GM12878 (cell line): ENCODE measurements at regions of chr3 and their contacts with region 1.

Region 1: GRCh38 chr3:4978204-4978965 is 852 bp upstream of the BHLHE40 start:
- DNase-seq: peak; percentile 78
- ATAC-seq: peak; percentile 52
- H3K4me3 ChIP-seq: peak overlapping the region; percentile 72
- H3K27ac ChIP-seq: peak overlapping the region; percentile 84
- H3K4me1 ChIP-seq: peaks cover 27% of the 10 kb centered on the region
- H3K27me3 ChIP-seq: no peaks in the 10 kb centered on the region
- CTCF ChIP-seq: no peak
- EP300 ChIP-seq: peak; percentile 60 to 80; a peak in 3 of 4 replicates
- POLR2A ChIP-seq: peak; percentile 89
- RAD21 ChIP-seq: 0 out of 2 replicates have a peak, but pooled peaks have one; percentile 5

Region 2: GRCh38 chr3:4744405-4745234 is 233.8 kb before region 1 on chr3:
- CTCF ChIA-PET with region 1: interaction called, 35 read pairs
- POLR2A ChIA-PET with region 1: interaction called, 230 read pairs
- RAD21 ChIA-PET with region 1: interaction called, 342 read pairs
- SMC1A ChIA-PET with region 1: interaction called, 122 read pairs
- in situ Hi-C with region 1: no loop called
- intact Hi-C with region 1: no loop called
- DNase-seq: no peak
- ATAC-seq: no peak
- H3K4me3 ChIP-seq: no peak overlapping the region
- H3K27ac ChIP-seq: no peak overlapping the region
- H3K4me1 ChIP-seq: peaks cover 14% of the 10 kb centered on the region
- H3K27me3 ChIP-seq: no peaks in the 10 kb centered on the region
- CTCF ChIP-seq: no peak
- EP300 ChIP-seq: no peak
- POLR2A ChIP-seq: no peak
- RAD21 ChIP-seq: no peak

Region 3: GRCh38 chr3:4786431-4786830 is 192.0 kb before region 1 on chr3:
- CTCF ChIA-PET with region 1: interaction called, 10 read pairs
- POLR2A ChIA-PET with region 1: interaction called, 3 read pairs
- RAD21 ChIA-PET with region 1: interaction called, 6 read pairs
- SMC1A ChIA-PET with region 1: interaction called, 36 read pairs
- in situ Hi-C with region 1: no loop called
- intact Hi-C with region 1: no loop called
- DNase-seq: no peak
- ATAC-seq: no peak
- H3K4me3 ChIP-seq: no peak overlapping the region
- H3K27ac ChIP-seq: no peak overlapping the region
- H3K4me1 ChIP-seq: no peaks in the 10 kb centered on the region
- H3K27me3 ChIP-seq: no peaks in the 10 kb centered on the region
- CTCF ChIP-seq: no peak
- EP300 ChIP-seq: no peak
- POLR2A ChIP-seq: no peak
- RAD21 ChIP-seq: no peak

Region 4: DNA sequence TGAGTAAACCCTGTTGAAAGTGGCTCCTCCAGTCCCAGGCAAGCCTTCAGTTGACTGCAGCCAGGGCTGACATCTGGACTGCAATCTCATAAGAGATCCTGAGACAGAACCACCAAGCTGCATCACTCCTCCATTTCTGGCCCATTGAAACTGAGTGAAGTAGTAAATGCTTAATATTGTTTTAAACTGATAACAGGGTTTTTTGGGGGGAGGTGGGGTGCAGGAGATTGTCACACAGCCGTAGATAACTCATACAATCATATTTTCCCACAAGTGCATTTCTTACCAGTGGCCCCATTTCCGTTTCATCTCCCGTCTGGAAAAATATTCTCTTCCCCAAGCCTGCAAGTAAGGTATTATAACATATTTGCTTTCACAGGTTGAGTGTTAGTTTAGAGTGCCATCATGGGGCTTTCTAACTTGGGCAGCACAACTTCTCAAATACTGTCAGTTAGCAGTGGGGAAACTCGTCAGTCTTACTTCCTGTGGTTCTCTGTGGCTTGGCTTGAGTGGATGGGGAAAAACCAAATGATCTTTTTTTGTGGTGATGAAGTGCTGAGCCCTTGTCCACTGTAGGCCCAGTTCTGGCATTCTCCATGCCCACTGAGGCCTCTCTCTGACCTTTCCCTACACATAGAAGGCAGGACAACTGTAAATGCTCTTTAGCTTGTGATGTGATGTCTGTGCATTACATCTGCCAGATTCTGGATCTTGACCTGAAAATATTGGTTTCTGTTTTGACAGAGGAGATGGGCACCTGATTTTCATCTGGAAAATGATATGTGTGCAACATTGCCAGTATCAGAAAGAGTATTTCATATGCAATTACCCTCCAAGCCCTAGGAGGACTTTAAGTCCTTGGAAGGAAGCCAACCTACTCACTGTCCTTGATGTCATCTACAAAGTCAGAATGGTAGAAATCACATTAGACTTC is 89.2 kb before region 1 on chr3:
- CTCF ChIA-PET with region 1: interaction called, 17 read pairs
- POLR2A ChIA-PET with region 1: interaction called, 3 read pairs
- RAD21 ChIA-PET with region 1: interaction called, 11 read pairs
- SMC1A ChIA-PET with region 1: interaction called, 25 read pairs
- in situ Hi-C with region 1: no loop called
- intact Hi-C with region 1: loop called (anchors 1 kb)
- DNase-seq: peak; percentile 71
- ATAC-seq: peak; percentile 96
- H3K4me3 ChIP-seq: no peak overlapping the region; the same call in 1 of the 2 replicates
- H3K27ac ChIP-seq: peak overlapping the region; percentile 69
- H3K4me1 ChIP-seq: peaks cover 12% of the 10 kb centered on the region
- H3K27me3 ChIP-seq: no peaks in the 10 kb centered on the region
- CTCF ChIP-seq: peak in 1 of 3 experiments; percentile 45; a peak in 3 of 6 replicates
- EP300 ChIP-seq: peak; percentile 51 to 71; a peak in 3 of 4 replicates
- POLR2A ChIP-seq: no peak
- RAD21 ChIP-seq: peak; percentile 74

Region 5: DNA sequence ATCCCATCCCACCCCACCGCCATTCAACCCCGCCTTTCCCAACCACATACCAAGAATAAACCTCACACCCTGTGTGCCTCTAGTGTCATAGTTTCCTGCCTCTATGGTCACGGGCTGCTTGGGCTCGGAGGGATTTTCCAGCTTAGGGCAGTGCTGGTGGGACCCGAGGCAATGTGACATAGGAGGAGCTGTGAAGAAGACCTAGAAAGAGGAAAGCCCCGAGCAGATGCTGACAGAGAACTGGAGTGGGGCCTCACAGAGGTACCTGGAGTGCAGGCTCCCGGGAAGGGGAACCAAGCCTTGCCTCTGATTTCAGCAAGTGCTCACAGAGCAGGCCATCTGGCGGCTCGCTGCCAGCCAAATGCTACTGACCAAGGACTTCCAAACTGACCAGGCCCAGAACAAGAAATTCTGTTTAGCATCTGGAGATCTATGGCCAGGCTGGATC is 28.4 kb after region 1 on chr3:
- CTCF ChIA-PET with region 1: interaction called, 330 read pairs
- POLR2A ChIA-PET with region 1: interaction called, 111 read pairs
- RAD21 ChIA-PET with region 1: interaction called, 421 read pairs
- SMC1A ChIA-PET with region 1: interaction called, 186 read pairs
- in situ Hi-C with region 1: no loop called
- intact Hi-C with region 1: no loop called
- DNase-seq: peak; percentile 95
- ATAC-seq: peak; percentile 78
- H3K4me3 ChIP-seq: 0 out of 2 replicates have a peak overlapping the region, but pooled peaks have one; percentile 26
- H3K27ac ChIP-seq: peak overlapping the region; percentile 94
- H3K4me1 ChIP-seq: peaks cover 53% of the 10 kb centered on the region
- H3K27me3 ChIP-seq: no peaks in the 10 kb centered on the region
- CTCF ChIP-seq: peak in 1 of 3 experiments; percentile 24; a peak in 2 of 6 replicates
- EP300 ChIP-seq: peak; percentile 98 to 99
- POLR2A ChIP-seq: peak; percentile 69; the same call in 1 of the 2 replicates
- RAD21 ChIP-seq: peak; percentile 30; the same call in 1 of the 2 replicates

Region 6: GRCh38 chr3:5187156-5187919 is 209.0 kb after region 1 on chr3 and contains the start of gene EDEM1:
- CTCF ChIA-PET with region 1: no interaction called
- POLR2A ChIA-PET with region 1: interaction called, 3 read pairs
- RAD21 ChIA-PET with region 1: no interaction called
- SMC1A ChIA-PET with region 1: no interaction called
- in situ Hi-C with region 1: no loop called
- intact Hi-C with region 1: loop called (anchors 2 kb)
- DNase-seq: peak; percentile 76
- ATAC-seq: peak; percentile 82
- H3K4me3 ChIP-seq: peak within 1 kb of the TSS; percentile 88
- H3K27ac ChIP-seq: peak within 1 kb of the TSS; percentile 96
- H3K4me1 ChIP-seq: peaks cover 29% of the 10 kb centered on the region
- H3K27me3 ChIP-seq: no peaks in the 10 kb centered on the region
- CTCF ChIP-seq: no peak
- EP300 ChIP-seq: no peak; a peak in 1 of 4 replicates
- POLR2A ChIP-seq: peak; percentile 78
- RAD21 ChIP-seq: no peak
- polyA plus RNA-seq, gene EDEM1: 18.9 to 48.0 TPM